ENCODE measurements at regions of chr11 and their contacts with region 1.

Region 1: DNA sequence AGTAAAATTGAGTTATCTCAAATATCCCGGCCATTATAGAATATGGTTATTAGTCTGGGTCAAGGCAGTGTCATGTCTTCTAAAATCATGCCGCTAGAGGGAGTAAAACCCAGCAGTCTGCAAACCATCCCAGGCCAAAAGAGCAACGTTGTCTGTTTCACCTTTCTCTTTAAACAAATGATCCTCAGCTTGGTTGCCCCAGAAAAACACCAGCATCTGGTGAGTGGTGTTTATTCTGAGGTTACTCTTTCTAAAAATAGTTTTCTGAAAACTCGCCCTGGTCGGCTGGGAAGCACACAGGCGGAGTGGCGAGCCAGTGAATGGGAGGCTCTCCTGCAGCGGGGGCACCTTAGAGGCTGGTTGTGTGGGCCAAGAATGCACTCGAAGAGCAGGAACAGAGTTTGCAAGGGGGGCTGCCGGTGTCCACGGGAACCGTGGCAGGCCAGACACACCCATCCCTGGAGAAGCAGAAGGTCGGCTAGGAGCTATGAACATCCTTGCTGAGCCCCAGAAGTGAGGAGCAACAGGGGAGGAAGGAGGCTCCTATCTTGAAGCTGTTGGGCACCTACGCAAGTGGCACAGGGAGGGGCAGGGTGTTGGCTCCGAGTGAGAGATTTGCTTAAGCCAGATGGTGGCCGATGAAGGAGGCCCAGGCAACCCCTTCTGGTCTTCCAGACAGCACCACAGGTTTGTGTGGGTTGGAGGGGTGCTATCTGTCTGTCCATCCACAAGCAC is 297.1 kb downstream of the ETS1 start:
- DNase-seq: peak; percentile 77 to 81
- ATAC-seq: peak; percentile 84

Region 2: GRCh38 chr11:128172046-128172878 is 118.0 kb before region 1 on chr11:
- intact Hi-C with region 1: loop called (anchors 10 kb)
- DNase-seq: peak; percentile 60 to 91
- ATAC-seq: peak; percentile 76

Region 3: GRCh38 chr11:128497061-128497775 is 206.9 kb after region 1 on chr11:
- intact Hi-C with region 1: no loop called
- DNase-seq: no peak
- ATAC-seq: no peak

Measured in left colon (tissue), 2 donors.